ENCODE measurements at regions of chr16 and their contacts with region 1.

Region 1: GRCh38 chr16:57576429-57576870 is 34.0 kb downstream of the ADGRG5 start:
- DNase-seq: peak; percentile 55 to 83 (median 72)
- ATAC-seq: peak; percentile 87
- H3K4me3 ChIP-seq: no peak overlapping the region
- H3K4me3 Mint-ChIP-seq: no peak overlapping the region
- H3K27ac ChIP-seq: no peak overlapping the region
- H3K27ac Mint-ChIP-seq: peak overlapping the region in 1 of 9 donors; percentile 96
- H3K4me1 ChIP-seq: peaks cover 0 to 44% of the 10 kb centered on the region in 2 donors
- H3K4me1 Mint-ChIP-seq: peaks cover 0 to 45% (median 6%) of the 10 kb centered on the region in 7 donors
- H3K27me3 ChIP-seq: no peaks in the 10 kb centered on the region
- H3K27me3 Mint-ChIP-seq: peaks cover 0 to 6% (median 4%) of the 10 kb centered on the region in 5 donors

Region 2: GRCh38 chr16:57204675-57205074 is 371.8 kb before region 1 on chr16:
- CTCF ChIA-PET with region 1: no interaction called
- POLR2A ChIA-PET with region 1: no interaction called
- intact Hi-C with region 1: no loop called
- DNase-seq: no peak
- ATAC-seq: no peak
- H3K4me3 ChIP-seq: no peak overlapping the region
- H3K4me3 Mint-ChIP-seq: no peak overlapping the region
- H3K27ac ChIP-seq: no peak overlapping the region
- H3K27ac Mint-ChIP-seq: no peak overlapping the region
- H3K4me1 ChIP-seq: no peaks in the 10 kb centered on the region
- H3K4me1 Mint-ChIP-seq: peaks cover 0 to 13% (median 6%) of the 10 kb centered on the region in 7 donors
- H3K27me3 ChIP-seq: no peaks in the 10 kb centered on the region
- H3K27me3 Mint-ChIP-seq: no peaks in the 10 kb centered on the region

Region 3: GRCh38 chr16:57519796-57520360 is 56.6 kb before region 1 on chr16:
- CTCF ChIA-PET with region 1: interaction called, 12 read pairs
- POLR2A ChIA-PET with region 1: no interaction called
- intact Hi-C with region 1: no loop called
- DNase-seq: peak; percentile 61 to 86 (median 73)
- ATAC-seq: peak; percentile 90
- H3K4me3 ChIP-seq: no peak overlapping the region
- H3K4me3 Mint-ChIP-seq: no peak overlapping the region
- H3K27ac ChIP-seq: no peak overlapping the region
- H3K27ac Mint-ChIP-seq: peak overlapping the region in 3 of 9 donors; percentile 62 to 83 (median 76)
- H3K4me1 ChIP-seq: peaks cover 7 to 8% of the 10 kb centered on the region in 2 donors
- H3K4me1 Mint-ChIP-seq: peaks cover 5 to 19% (median 6%) of the 10 kb centered on the region in 7 donors
- H3K27me3 ChIP-seq: no peaks in the 10 kb centered on the region
- H3K27me3 Mint-ChIP-seq: no peaks in the 10 kb centered on the region

Region 4: GRCh38 chr16:57530104-57530521 is 46.3 kb before region 1 on chr16:
- CTCF ChIA-PET with region 1: no interaction called
- POLR2A ChIA-PET with region 1: no interaction called
- intact Hi-C with region 1: no loop called
- DNase-seq: peak in 8 of 9 donors; percentile 56 to 83 (median 68)
- ATAC-seq: peak; percentile 91
- H3K4me3 ChIP-seq: peak overlapping the region; percentile 45
- H3K4me3 Mint-ChIP-seq: peak overlapping the region; percentile 61 to 88 (median 83)
- H3K27ac ChIP-seq: peak overlapping the region; percentile 87
- H3K27ac Mint-ChIP-seq: peak overlapping the region; percentile 85 to 99 (median 96)
- H3K4me1 ChIP-seq: peaks cover 41 to 54% of the 10 kb centered on the region in 2 donors
- H3K4me1 Mint-ChIP-seq: peaks cover 49 to 61% (median 59%) of the 10 kb centered on the region in 7 donors
- H3K27me3 ChIP-seq: no peaks in the 10 kb centered on the region
- H3K27me3 Mint-ChIP-seq: no peaks in the 10 kb centered on the region

Region 5: GRCh38 chr16:57591086-57591869 is 14.8 kb after region 1 on chr16:
- CTCF ChIA-PET with region 1: interaction called, 6 read pairs
- POLR2A ChIA-PET with region 1: interaction called, 3 read pairs
- intact Hi-C with region 1: loop called (anchors 1 kb)
- DNase-seq: peak; percentile 30 to 72 (median 48)
- ATAC-seq: peak; percentile 70
- H3K4me3 ChIP-seq: peak overlapping the region; percentile 25
- H3K4me3 Mint-ChIP-seq: peak overlapping the region; percentile 9 to 83 (median 69)
- H3K27ac ChIP-seq: no peak overlapping the region
- H3K27ac Mint-ChIP-seq: peak overlapping the region; percentile 17 to 92 (median 75)
- H3K4me1 ChIP-seq: peaks cover 27 to 47% of the 10 kb centered on the region in 2 donors
- H3K4me1 Mint-ChIP-seq: peaks cover 26 to 43% (median 38%) of the 10 kb centered on the region in 7 donors
- H3K27me3 ChIP-seq: no peaks in the 10 kb centered on the region
- H3K27me3 Mint-ChIP-seq: peaks cover 0 to 2% (median 0%) of the 10 kb centered on the region in 5 donors

Region 6: GRCh38 chr16:57648590-57649442 is 72.4 kb after region 1 on chr16:
- CTCF ChIA-PET with region 1: interaction called, 47 read pairs
- POLR2A ChIA-PET with region 1: interaction called, 4 read pairs
- intact Hi-C with region 1: loop called (anchors 1 kb)
- DNase-seq: peak; percentile 63 to 90 (median 80)
- ATAC-seq: peak; percentile 90
- H3K4me3 ChIP-seq: no peak overlapping the region
- H3K4me3 Mint-ChIP-seq: peak overlapping the region in 2 of 10 donors; percentile 7 to 77
- H3K27ac ChIP-seq: no peak overlapping the region
- H3K27ac Mint-ChIP-seq: peak overlapping the region in 5 of 9 donors; percentile 11 to 66 (median 59)
- H3K4me1 ChIP-seq: peaks cover 0 to 29% of the 10 kb centered on the region in 2 donors
- H3K4me1 Mint-ChIP-seq: peaks cover 6 to 33% (median 15%) of the 10 kb centered on the region in 7 donors
- H3K27me3 ChIP-seq: no peaks in the 10 kb centered on the region
- H3K27me3 Mint-ChIP-seq: no peaks in the 10 kb centered on the region

Region 7: DNA sequence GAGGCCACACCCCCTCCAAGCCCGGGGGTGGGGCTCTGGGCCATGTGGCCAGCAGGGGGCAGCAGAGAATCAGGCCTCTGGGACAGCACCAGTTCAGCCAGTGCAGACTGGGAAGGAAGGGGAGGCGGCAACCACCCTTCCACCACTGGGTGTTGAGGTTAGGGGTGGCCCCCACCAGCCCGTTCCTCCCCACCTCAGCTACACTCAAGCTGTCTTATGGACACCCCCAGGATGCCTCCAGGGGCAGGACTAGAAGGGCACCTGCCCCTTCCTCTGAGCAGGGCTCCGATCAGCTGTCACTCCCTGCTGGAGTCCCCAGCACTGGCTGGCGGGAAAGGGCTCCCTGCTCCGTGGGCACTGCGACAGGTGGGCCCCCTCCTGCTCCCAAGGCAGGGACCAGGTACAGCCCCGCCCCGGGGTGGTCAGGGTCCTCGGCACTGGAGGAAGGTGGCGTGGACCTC is 180.9 kb after region 1 on chr16:
- CTCF ChIA-PET with region 1: interaction called, 3 read pairs
- POLR2A ChIA-PET with region 1: no interaction called
- intact Hi-C with region 1: loop called in 1 of 2 experiments (anchors 2 kb)
- DNase-seq: peak; percentile 61 to 93 (median 81)
- ATAC-seq: peak; percentile 93
- H3K4me3 ChIP-seq: no peak overlapping the region
- H3K4me3 Mint-ChIP-seq: no peak overlapping the region
- H3K27ac ChIP-seq: no peak overlapping the region
- H3K27ac Mint-ChIP-seq: no peak overlapping the region
- H3K4me1 ChIP-seq: peaks cover 0 to 5% of the 10 kb centered on the region in 2 donors
- H3K4me1 Mint-ChIP-seq: peaks cover 0 to 3% (median 0%) of the 10 kb centered on the region in 7 donors
- H3K27me3 ChIP-seq: no peaks in the 10 kb centered on the region
- H3K27me3 Mint-ChIP-seq: no peaks in the 10 kb centered on the region